Ascending aorta (tissue), 2 donors: ENCODE measurements at regions of chr4 and their contacts with region 1.

Region 1: DNA sequence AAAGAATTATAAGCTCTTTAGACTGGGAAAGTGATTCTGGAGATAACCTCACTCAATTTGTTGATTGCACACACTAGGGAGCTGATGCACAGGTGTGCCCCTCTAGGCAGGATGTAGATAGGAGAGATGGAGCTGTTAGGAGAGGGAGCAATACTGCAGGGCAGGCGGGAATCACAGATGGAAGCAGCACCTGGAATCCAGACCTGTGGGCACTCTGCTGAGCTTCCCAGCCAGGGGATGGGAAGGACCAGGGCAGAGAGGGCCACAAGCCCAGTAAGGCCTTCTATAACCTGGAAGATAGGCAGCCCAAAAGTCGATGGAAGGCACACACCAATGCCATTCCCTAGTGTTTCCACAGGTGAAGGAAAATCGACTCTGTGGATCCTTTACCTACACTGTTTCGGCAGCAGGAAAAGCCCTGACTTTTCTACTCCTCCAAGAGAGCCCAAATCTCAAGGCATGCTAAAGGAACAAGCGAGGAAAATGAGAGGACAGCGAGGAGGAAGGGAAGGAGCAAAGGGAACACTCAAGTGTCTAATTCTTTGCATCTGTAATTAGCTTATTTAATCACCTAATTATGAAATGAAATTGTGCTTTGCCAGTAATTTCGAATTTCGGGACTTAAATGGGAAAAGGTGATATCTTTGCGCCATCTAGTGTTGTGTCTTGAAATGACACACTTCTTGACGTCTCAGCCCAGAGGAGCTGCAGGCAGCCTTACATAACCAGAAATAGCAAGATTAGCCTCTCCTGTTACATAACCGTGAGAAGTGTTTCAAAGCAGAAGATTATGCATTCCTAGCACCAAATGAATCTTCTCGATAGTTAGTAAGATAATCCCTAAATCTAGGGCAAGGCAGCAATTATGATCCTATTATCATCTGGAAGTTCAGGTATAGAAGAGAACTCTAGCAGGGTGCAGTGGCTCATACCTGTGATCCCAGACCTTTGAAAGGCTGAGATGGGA is 31.0 kb upstream of the TLR3 start:
- DNase-seq: no peak
- H3K4me3 ChIP-seq: no peak overlapping the region
- H3K27ac ChIP-seq: no peak overlapping the region
- H3K4me1 ChIP-seq: no peaks in the 10 kb centered on the region
- H3K27me3 ChIP-seq: no peaks in the 10 kb centered on the region
- CTCF ChIP-seq: peak; percentile 68 to 81 (median 71)

Region 2: DNA sequence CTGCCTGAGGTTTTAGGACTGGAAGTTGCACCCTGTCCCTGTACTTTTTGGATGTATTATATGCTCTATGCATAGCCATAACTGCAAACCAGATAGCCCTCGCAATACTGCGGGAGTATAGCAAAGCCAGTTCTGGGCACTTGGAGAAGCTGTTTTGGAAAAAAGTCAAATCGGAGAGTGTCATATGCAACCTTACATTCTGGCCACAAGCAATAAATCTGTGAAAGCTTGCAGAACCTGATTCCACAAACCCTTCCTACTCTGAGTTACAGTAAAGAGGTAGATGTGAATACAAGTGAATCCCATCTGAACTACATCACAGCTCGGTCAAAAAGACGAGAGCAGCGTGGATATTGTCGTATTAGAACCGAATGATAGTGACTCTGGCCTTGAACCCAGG is 1009.4 kb before region 1 on chr4:
- intact Hi-C with region 1: loop called (anchors 5 kb)
- DNase-seq: no peak
- H3K4me3 ChIP-seq: no peak overlapping the region
- H3K27ac ChIP-seq: no peak overlapping the region
- H3K4me1 ChIP-seq: no peaks in the 10 kb centered on the region
- H3K27me3 ChIP-seq: no peaks in the 10 kb centered on the region
- CTCF ChIP-seq: no peak

Region 3: GRCh38 chr4:185183619-185184281 is 854.2 kb before region 1 on chr4:
- intact Hi-C with region 1: loop called (anchors 10 kb)
- DNase-seq: peak in 1 of 2 donors; percentile 93
- H3K4me3 ChIP-seq: no peak overlapping the region
- H3K27ac ChIP-seq: peak overlapping the region in 1 of 2 donors; percentile 28
- H3K4me1 ChIP-seq: peaks cover 0 to 29% of the 10 kb centered on the region in 2 donors
- H3K27me3 ChIP-seq: no peaks in the 10 kb centered on the region
- CTCF ChIP-seq: peak; percentile 57 to 77 (median 76)

Region 4: GRCh38 chr4:185534866-185535611 is 502.9 kb before region 1 on chr4 and contains the start of gene PDLIM3:
- intact Hi-C with region 1: loop called (anchors 1 kb)
- DNase-seq: peak in 1 of 2 donors; percentile 92
- H3K4me3 ChIP-seq: peak within 1 kb of the TSS; percentile 65 to 93
- H3K27ac ChIP-seq: peak within 1 kb of the TSS; percentile 94 to 98
- H3K4me1 ChIP-seq: peaks cover 0 to 3% of the 10 kb centered on the region in 2 donors
- H3K27me3 ChIP-seq: no peaks in the 10 kb centered on the region
- CTCF ChIP-seq: no peak
- total RNA-seq, gene PDLIM3: 445 TPM

Region 5: GRCh38 chr4:185640811-185641675 is 396.9 kb before region 1 on chr4:
- intact Hi-C with region 1: loop called (anchors 2 kb)
- DNase-seq: no peak
- H3K4me3 ChIP-seq: no peak overlapping the region
- H3K27ac ChIP-seq: no peak overlapping the region
- H3K4me1 ChIP-seq: peaks cover 0 to 3% of the 10 kb centered on the region in 2 donors
- H3K27me3 ChIP-seq: no peaks in the 10 kb centered on the region
- CTCF ChIP-seq: peak in 2 of 3 experiments; percentile 40 to 56

Region 6: GRCh38 chr4:187090401-187090800 is 1052.4 kb after region 1 on chr4:
- intact Hi-C with region 1: no loop called
- DNase-seq: no peak
- H3K4me3 ChIP-seq: no peak overlapping the region
- H3K27ac ChIP-seq: no peak overlapping the region
- H3K4me1 ChIP-seq: no peaks in the 10 kb centered on the region
- H3K27me3 ChIP-seq: no peaks in the 10 kb centered on the region
- CTCF ChIP-seq: no peak

Region 7: DNA sequence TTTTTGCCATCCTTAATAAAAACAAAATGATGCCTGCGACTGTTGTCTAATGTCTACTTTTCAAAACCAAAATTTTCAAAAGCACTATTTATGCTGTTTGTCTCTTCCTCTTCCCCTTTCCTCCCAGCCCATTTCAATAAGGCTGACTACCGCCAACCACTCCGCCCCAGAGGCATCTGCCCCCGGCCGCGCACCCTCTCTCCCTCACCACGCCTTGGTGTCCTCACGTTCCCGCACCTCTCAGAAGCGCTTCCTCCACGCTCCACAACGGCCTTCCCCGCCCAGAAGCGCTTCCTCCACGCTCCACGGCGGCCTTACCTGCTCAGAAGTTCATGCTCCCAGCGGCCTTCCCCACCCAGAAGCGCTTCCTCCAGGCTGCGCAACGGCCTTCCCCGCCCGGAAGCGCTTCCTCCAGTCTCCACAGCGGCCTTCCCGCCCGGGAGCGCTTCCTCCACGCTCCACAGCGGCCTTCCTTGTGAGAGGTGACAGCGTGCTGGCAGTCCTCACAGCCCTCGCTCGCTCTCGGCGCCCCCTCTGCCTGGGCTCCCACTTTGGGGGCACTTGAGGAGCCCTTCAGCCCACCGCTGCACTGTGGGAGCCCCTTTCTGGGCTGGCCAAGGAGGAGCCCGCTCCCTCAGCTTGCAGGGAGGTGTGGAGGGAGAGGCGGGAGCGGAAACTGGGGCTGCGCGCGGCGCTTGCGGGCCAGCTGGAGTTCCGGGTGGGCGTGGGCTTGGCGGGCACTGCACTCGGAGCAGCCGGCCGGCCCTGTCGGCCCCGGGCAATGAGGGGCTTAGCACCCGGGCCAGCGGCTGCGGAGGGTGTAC is 1467.2 kb after region 1 on chr4:
- intact Hi-C with region 1: no loop called
- DNase-seq: no peak
- H3K4me3 ChIP-seq: no peak overlapping the region
- H3K27ac ChIP-seq: no peak overlapping the region
- H3K4me1 ChIP-seq: no peaks in the 10 kb centered on the region
- H3K27me3 ChIP-seq: no peaks in the 10 kb centered on the region
- CTCF ChIP-seq: no peak